Right lobe of liver (tissue), 6 donors: ENCODE measurements at regions of chr6 and their contacts with region 1.

Region 1: DNA sequence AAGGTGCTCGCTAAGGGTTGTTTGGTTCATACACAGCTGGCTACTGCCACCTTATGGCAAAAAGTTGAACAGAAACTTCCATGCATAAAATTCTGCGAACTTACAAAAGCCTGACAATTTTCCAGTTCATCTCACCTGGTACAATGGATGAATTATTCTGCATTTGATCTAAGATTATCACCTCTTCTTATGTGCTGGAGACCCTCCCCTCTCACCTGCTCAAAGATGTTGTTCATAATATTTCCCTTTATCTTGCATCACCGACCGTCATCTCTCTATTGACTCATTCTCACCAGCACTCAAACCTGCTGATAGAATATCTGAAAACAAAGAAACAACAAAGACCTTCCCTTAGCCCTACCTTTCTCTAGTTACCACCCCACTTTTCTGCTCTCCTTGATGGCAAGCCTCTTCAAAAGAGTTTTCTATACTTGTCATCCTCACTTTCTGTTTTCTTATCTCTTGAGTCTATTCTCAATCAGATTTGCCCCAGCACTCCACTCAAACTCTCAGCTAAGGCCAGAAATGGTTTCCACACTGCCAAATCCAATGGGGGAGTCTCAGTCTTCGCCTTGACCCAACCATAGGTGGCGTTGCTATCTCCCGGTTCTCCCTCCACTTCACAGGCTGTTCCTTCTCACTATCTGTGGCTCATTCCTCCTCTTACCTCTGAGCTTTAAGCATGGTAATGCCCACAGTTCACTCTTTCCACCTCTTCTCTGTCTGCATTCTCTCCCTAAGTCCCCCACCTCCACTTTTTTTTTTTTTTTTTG is 25.8 kb downstream of the SNRNP48 start:
- DNase-seq: no peak
- ATAC-seq: peak; percentile 80 to 84 (median 82)
- H3K4me3 ChIP-seq: no peak overlapping the region
- H3K27ac ChIP-seq: no peak overlapping the region
- H3K4me1 ChIP-seq: peaks cover 0 to 6% (median 0%) of the 10 kb centered on the region in 4 donors
- H3K27me3 ChIP-seq: no peaks in the 10 kb centered on the region
- CTCF ChIP-seq: peak; percentile 71 to 91 (median 80)
- POLR2A ChIP-seq: no peak

Region 2: DNA sequence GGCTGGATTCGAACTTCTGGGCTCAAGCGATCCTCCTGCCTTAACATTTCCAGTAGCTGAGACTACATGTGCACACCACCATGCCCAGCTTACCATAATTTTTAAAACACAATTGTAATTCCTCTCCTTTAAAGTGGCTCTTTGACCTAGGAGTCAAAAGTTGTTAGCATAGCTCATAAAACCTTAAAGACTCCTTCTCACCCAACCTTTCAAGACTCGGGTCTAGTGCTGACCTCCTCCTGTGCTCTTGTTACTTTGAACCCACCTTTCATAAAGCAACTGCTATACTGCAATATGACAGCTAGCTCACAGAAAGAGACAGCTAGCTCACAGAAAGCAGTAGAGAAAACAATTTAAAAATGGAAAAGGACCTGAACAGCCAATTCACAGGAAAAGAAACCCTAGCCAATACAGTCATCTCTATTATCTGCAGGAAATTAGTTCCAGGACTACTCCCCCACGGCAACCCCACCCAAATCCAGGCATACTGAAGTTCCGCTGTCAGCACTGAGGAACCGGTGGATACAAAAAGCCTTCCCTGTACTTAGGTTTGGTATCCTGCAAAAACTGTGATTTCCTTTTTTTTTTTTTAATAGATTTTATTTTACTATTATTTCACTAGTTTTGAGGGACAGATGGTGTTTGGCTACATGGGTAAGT is 323.1 kb before region 1 on chr6:
- intact Hi-C with region 1: loop called in 1 of 2 experiments (anchors 10 kb)
- DNase-seq: no peak
- ATAC-seq: no peak
- H3K4me3 ChIP-seq: no peak overlapping the region
- H3K27ac ChIP-seq: no peak overlapping the region
- H3K4me1 ChIP-seq: no peaks in the 10 kb centered on the region
- H3K27me3 ChIP-seq: no peaks in the 10 kb centered on the region
- CTCF ChIP-seq: no peak
- POLR2A ChIP-seq: no peak

Region 3: GRCh38 chr6:7424967-7425807 is 190.6 kb before region 1 on chr6:
- intact Hi-C with region 1: loop called in 1 of 2 experiments (anchors 10 kb)
- DNase-seq: no peak
- ATAC-seq: peak; percentile 90 to 98 (median 93)
- H3K4me3 ChIP-seq: no peak overlapping the region
- H3K27ac ChIP-seq: no peak overlapping the region
- H3K4me1 ChIP-seq: peaks cover 0 to 11% (median 2%) of the 10 kb centered on the region in 4 donors
- H3K27me3 ChIP-seq: no peaks in the 10 kb centered on the region
- CTCF ChIP-seq: peak; percentile 52 to 61 (median 60)
- POLR2A ChIP-seq: no peak